CD8-positive, alpha-beta T cell (primary cell): ENCODE measurements at regions of chr11 and their contacts with region 1.

Region 1: DNA sequence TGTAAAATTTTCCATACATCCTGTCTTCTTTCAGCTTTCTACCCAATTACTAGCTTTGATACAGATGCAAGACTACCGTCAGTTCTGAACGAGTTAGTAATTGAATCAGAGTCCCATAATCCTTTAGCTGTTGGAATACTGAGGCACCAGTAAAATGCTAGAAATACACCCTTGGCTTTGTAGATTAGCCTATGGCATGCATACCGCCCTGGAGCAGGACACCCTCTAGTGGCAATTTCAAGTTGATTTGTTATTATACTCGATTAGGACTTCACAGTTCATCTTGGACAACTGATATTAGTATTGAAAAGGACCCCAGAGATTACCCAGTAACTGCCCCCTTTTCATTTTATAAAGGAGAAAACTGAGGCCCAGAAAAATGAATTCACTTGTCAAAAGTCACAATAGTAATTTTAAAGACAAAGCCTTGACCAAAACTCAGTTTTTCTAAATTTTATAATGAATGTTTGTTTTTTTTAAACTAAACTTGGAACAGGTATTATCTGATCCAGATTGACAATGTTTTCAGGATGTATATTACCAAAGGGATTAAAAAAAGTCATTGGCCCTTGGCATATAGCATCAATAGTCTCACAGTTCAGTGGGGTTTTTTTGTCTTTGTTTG is 72.6 kb downstream of the HIPK3 start:
- DNase-seq: peak in 8 of 9 experiments; percentile 21 to 73 (median 41)
- ATAC-seq: peak; percentile 58
- H3K4me3 ChIP-seq: no peak overlapping the region
- H3K4me3 Mint-ChIP-seq: no peak overlapping the region
- H3K27ac ChIP-seq: no peak overlapping the region
- H3K27ac Mint-ChIP-seq: no peak overlapping the region
- H3K4me1 ChIP-seq: no peaks in the 10 kb centered on the region
- H3K4me1 Mint-ChIP-seq: peaks cover 31% of the 10 kb centered on the region
- H3K27me3 ChIP-seq: no peaks in the 10 kb centered on the region
- H3K27me3 Mint-ChIP-seq: no peaks in the 10 kb centered on the region
- CTCF ChIP-seq: peak; percentile 70

Region 2: DNA sequence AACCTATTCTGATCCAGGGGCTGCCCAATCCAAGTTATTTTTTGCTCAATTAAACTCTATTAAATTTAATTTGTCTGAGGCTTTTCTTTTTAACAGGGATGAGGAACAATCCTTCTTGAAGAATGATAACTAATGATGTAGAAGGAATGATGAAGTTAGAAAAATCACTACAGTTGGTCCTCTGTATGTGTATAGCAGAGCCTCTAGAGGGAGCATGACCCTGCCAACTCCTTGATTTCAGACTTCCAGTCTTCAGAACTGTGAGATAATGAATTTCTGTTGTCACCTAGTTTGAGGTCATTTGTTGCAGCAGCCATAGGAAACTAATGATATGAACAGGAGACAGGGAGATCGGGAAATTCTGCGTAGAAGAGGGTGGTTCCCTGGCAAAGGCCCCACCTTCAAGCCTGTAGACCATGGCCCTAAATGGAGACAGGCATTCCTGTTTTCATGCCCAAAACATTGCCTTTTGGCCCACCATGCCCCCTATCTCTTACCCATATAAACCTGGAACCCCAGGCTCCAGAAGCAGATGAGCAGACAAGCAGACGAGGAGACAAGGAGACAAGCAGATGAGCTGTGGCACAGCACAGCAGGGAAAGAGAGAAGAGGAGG is 444.9 kb before region 1 on chr11:
- CTCF ChIA-PET with region 1: no interaction called
- POLR2A ChIA-PET with region 1: no interaction called
- intact Hi-C with region 1: loop called in 1 of 2 experiments (anchors 10 kb)
- DNase-seq: peak in 2 of 9 experiments; percentile 25 to 31
- ATAC-seq: no peak
- H3K4me3 ChIP-seq: no peak overlapping the region
- H3K4me3 Mint-ChIP-seq: no peak overlapping the region
- H3K27ac ChIP-seq: no peak overlapping the region
- H3K27ac Mint-ChIP-seq: no peak overlapping the region
- H3K4me1 ChIP-seq: no peaks in the 10 kb centered on the region
- H3K4me1 Mint-ChIP-seq: no peaks in the 10 kb centered on the region
- H3K27me3 ChIP-seq: peaks cover 0 to 3% of the 10 kb centered on the region in 2 experiments
- H3K27me3 Mint-ChIP-seq: no peaks in the 10 kb centered on the region
- CTCF ChIP-seq: no peak

Region 3: GRCh38 chr11:32960553-32961164 is 369.2 kb before region 1 on chr11:
- CTCF ChIA-PET with region 1: interaction called, 3 read pairs
- POLR2A ChIA-PET with region 1: no interaction called
- intact Hi-C with region 1: loop called (anchors 5 kb)
- DNase-seq: peak in 2 of 9 experiments; percentile 62 to 69
- ATAC-seq: peak; percentile 46
- H3K4me3 ChIP-seq: no peak overlapping the region
- H3K4me3 Mint-ChIP-seq: no peak overlapping the region
- H3K27ac ChIP-seq: no peak overlapping the region
- H3K27ac Mint-ChIP-seq: no peak overlapping the region
- H3K4me1 ChIP-seq: no peaks in the 10 kb centered on the region
- H3K4me1 Mint-ChIP-seq: no peaks in the 10 kb centered on the region
- H3K27me3 ChIP-seq: no peaks in the 10 kb centered on the region
- H3K27me3 Mint-ChIP-seq: no peaks in the 10 kb centered on the region
- CTCF ChIP-seq: peak; percentile 78

Region 4: GRCh38 chr11:33227578-33228262 is 102.1 kb before region 1 on chr11:
- CTCF ChIA-PET with region 1: no interaction called
- POLR2A ChIA-PET with region 1: no interaction called
- intact Hi-C with region 1: no loop called
- DNase-seq: no peak
- ATAC-seq: no peak
- H3K4me3 ChIP-seq: no peak overlapping the region
- H3K4me3 Mint-ChIP-seq: no peak overlapping the region
- H3K27ac ChIP-seq: no peak overlapping the region
- H3K27ac Mint-ChIP-seq: no peak overlapping the region
- H3K4me1 ChIP-seq: no peaks in the 10 kb centered on the region
- H3K4me1 Mint-ChIP-seq: no peaks in the 10 kb centered on the region
- H3K27me3 ChIP-seq: no peaks in the 10 kb centered on the region
- H3K27me3 Mint-ChIP-seq: no peaks in the 10 kb centered on the region
- CTCF ChIP-seq: no peak

Region 5: DNA sequence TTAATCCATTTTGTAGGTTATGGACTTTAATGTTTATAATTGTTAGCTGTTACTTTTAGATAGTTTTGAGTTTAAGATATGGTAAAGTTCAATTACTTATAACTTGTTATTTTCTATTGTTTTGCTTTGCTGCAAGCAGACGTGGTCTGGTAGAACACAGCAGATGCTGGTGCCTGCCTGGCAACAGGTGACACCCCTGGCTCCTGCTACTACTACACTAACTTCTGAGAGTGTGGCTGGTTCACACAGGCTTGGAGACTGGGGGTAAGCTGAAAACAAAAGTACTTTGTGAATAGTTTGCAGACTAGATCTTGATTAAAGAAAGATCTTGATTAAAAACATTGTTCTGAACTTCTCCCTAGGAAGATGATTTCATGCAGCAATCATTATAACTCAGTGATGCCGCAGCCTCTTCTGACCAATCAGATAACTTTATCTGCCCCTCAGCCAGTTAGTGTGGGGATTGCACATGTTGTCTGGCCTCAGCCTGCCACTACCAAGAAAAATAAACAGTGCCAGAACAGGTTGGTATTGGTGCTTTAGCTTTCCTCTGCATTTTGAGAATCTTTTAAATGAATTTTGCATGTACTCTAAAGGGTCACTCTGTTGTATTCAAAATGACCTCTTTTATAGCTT is 17.8 kb after region 1 on chr11:
- CTCF ChIA-PET with region 1: no interaction called
- POLR2A ChIA-PET with region 1: no interaction called
- intact Hi-C with region 1: no loop called
- DNase-seq: peak in 1 of 9 experiments; percentile 4
- ATAC-seq: no peak
- H3K4me3 ChIP-seq: no peak overlapping the region
- H3K4me3 Mint-ChIP-seq: no peak overlapping the region
- H3K27ac ChIP-seq: no peak overlapping the region
- H3K27ac Mint-ChIP-seq: no peak overlapping the region
- H3K4me1 ChIP-seq: no peaks in the 10 kb centered on the region
- H3K4me1 Mint-ChIP-seq: no peaks in the 10 kb centered on the region
- H3K27me3 ChIP-seq: no peaks in the 10 kb centered on the region
- H3K27me3 Mint-ChIP-seq: no peaks in the 10 kb centered on the region
- CTCF ChIP-seq: no peak

Region 6: GRCh38 chr11:33575311-33575710 is 245.5 kb after region 1 on chr11:
- CTCF ChIA-PET with region 1: no interaction called
- POLR2A ChIA-PET with region 1: no interaction called
- intact Hi-C with region 1: no loop called
- DNase-seq: no peak
- ATAC-seq: no peak
- H3K4me3 ChIP-seq: no peak overlapping the region
- H3K4me3 Mint-ChIP-seq: no peak overlapping the region
- H3K27ac ChIP-seq: no peak overlapping the region
- H3K27ac Mint-ChIP-seq: no peak overlapping the region
- H3K4me1 ChIP-seq: no peaks in the 10 kb centered on the region
- H3K4me1 Mint-ChIP-seq: no peaks in the 10 kb centered on the region
- H3K27me3 ChIP-seq: no peaks in the 10 kb centered on the region
- H3K27me3 Mint-ChIP-seq: peaks cover 5% of the 10 kb centered on the region
- CTCF ChIP-seq: no peak